GM13976 (cell line): ENCODE measurements at regions of chr6 and their contacts with region 1.

Region 1: DNA sequence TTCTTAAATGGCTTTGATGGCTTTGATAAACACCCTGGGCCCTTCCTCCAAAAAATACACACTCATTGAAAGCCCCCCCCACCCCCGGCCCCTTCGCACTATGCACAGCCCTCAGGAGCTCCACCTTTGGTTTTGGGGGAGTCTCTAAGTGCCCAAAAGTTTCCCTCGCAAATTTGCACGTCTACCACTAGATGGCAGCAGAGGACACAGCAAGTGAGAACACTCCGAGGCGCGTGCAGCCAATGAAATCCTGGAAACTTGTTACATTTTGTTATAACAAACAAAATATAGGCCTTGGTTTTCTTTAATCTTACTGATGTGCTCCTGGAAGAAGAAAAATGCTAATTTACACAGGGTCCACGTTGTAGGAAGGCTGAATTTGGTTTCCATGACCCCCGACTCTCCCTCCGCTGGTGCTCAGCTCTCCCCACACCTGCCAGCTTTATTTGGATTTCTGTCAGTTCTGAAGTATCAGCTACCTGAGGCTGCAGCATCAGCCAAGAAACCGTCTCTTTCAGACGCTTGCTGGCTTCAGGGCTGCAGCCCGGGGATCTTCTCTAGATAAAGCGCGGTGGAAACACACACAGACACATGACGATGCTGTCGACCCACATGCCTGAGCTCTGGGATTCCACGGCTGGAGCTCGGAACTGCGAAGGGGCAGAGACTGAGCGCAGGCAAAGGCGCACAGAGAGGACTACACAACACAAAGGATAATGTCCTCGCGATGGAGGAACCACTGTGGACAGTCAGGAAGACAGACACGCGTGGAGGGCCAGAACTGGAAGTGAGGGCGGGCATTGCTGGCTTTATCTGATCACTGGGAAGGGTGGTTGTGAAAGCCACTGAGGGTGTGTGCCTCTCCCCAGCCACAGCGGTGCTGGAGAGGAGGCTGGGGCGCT is 148.4 kb upstream of the RPS6KA2 start:
- DNase-seq: peak; percentile 87
- CTCF ChIP-seq: peak; percentile 72

Region 2: DNA sequence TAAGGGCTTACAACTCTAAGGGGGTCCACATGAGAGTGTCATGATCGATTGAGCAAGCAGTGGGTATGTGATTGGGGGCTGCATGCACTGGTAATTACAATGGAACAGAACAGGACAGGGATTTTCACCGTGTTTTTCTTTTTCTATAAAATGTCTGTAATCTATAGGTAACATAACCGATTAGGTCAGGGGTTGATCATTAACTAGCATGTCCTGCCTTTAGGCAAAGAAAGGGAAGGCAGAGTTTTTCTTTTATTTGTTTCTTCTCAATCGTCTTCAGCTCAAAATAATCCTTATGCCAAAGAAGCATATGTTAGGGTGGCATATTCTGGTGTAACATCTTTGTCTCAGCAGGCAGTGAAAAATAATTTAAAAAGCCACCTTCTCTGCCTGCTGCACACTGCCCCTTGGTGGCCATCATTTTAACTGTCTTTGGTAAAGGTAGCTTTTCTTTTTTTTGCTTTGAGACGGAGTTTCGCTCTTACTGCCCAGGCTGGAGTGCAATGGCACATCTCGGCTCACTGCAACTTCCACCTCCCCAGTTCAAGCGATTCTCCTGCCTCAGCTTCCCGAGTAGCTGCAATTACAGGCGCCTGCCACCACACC is 214.1 kb after region 1 on chr6:
- in situ Hi-C with region 1: loop called (anchors 10 kb)
- DNase-seq: no peak
- CTCF ChIP-seq: peak; percentile 67

Region 3: DNA sequence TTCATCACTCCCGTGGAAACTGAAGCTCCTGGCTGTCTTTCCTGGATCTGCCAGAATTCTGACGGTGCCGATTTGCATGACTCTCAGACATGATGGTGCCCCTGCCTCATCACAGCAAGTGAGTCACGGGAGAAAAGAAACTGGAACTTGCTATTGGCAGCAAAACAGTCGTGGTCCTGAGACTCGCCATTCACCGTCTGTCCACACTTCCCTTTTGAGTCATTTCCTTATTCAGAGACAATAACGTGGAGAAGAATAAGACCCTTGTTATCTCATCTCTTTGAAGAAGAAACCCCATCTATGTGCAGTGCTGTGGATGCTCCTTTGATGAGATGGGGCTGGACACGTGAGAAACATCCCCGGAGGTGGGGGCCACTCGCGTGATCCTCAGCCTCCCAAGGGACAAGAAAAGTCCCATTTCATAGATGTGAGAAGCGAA is 378.1 kb after region 1 on chr6:
- in situ Hi-C with region 1: loop called (anchors 10 kb)
- DNase-seq: peak; percentile 76
- CTCF ChIP-seq: no peak